WTC11 (cell line): ENCODE measurements at regions of chr6 and their contacts with region 1.

Region 1: DNA sequence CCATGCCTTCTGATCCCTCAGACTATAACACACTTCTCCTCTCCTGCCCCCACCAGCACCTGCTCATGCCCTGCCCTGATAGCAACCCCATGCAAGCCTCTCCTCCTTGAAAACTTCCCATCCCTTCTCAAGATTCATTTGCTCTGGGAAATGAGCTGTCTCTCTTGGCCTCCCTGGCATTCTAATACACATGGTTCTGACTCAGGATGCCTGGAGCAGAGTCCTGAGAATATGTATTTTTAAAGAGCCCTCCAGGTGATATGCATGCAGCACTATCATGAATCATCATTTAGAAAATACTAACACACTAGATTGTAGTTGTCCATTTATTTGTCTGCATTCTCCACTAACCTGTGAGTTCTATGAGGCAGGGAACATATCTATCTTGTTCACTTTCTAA is 26.6 kb downstream of the HDGFL1 start:
- DNase-seq: no peak
- ATAC-seq: no peak
- H3K4me3 Mint-ChIP-seq: no peak overlapping the region
- H3K27ac Mint-ChIP-seq: no peak overlapping the region
- H3K4me1 Mint-ChIP-seq: peaks cover 11% of the 10 kb centered on the region
- H3K27me3 Mint-ChIP-seq: no peaks in the 10 kb centered on the region
- CTCF ChIP-seq: no peak

Region 2: DNA sequence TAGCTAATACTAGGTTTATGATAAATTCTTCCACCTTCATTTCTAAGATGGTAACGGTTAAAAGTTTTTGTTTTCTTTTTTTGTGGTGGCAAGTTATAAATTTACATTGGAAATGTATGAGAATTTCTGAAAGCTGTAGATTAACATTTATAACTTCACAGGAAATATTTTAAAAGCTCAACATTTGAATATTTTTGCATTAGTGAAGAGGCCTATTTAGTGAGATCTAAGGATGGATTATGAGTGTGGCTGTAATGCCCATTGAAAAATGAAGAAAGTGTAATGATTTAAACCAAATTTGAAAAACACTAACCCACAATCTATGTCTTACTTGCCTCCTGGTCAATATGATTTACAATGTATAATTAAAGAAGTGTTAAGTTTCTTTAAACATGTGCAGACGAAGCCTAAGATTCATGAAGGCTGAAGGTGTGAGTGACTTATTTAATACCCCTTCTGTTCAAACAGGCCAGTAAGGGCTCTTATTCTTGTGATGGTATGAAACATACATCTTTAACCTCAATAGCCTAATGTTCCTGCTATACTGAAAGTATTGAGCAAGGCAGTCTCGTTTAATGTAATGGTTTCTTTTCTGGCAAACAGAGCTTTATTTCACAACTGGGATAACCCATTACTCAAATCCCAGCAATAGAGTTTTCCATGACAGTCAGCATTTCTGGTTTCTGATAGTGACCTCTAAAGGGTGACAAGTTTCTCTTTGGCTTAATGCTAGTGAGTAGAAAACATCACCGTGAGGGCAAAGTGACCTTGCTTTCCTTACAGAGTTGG is 13.4 kb before region 1 on chr6:
- CTCF ChIA-PET with region 1: no interaction called
- POLR2A ChIA-PET with region 1: no interaction called
- DNase-seq: no peak
- ATAC-seq: no peak
- H3K4me3 Mint-ChIP-seq: no peak overlapping the region
- H3K27ac Mint-ChIP-seq: no peak overlapping the region
- H3K4me1 Mint-ChIP-seq: peaks cover 43% of the 10 kb centered on the region
- H3K27me3 Mint-ChIP-seq: no peaks in the 10 kb centered on the region
- CTCF ChIP-seq: no peak

Region 3: GRCh38 chr6:22784601-22785410 is 188.8 kb after region 1 on chr6:
- CTCF ChIA-PET with region 1: no interaction called
- POLR2A ChIA-PET with region 1: interaction called, 10 read pairs
- DNase-seq: no peak
- ATAC-seq: peak; percentile 88
- H3K4me3 Mint-ChIP-seq: no peak overlapping the region
- H3K27ac Mint-ChIP-seq: peak overlapping the region; percentile 35; the same call in 1 of the 2 replicates
- H3K4me1 Mint-ChIP-seq: peaks cover 16% of the 10 kb centered on the region
- H3K27me3 Mint-ChIP-seq: no peaks in the 10 kb centered on the region
- CTCF ChIP-seq: no peak